ENCODE measurements at regions of chr3 and their contacts with region 1.

Region 1: DNA sequence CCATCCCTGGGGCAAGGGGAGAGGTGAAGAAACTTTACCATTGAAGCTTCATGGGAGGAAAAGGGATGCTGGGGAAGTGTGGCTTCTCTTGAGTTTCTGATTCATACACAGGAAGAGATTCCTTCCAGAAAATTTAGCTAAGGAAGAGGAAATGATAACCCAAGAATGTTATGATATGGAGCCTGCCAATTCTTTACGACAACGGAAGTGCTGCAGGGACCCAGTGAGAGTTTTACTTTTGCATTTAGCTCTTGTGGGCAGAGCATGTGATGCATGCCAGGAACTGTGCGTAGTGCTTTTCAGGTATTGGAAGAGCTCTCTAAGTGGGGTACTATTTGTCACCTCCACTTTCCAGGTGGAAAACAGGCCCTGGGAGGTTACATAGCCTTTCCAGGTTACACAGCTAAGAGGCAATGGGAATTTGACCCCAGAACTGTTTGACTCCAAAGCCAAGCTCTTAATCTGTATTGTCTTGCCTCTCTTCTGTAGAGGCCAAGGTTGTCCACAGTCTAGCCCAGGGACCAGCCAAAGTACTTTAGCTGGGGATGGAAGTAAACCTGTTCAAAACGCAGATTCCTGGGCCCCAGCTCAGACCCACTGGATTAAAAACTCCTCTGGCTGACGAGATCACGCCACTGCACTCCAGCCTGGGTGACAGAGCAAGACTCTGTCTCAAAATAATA is 23.0 kb downstream of the CMTM7 start:
- DNase-seq: no peak
- H3K4me3 ChIP-seq: no peak overlapping the region
- H3K27ac ChIP-seq: no peak overlapping the region
- H3K4me1 ChIP-seq: peaks cover 36% of the 10 kb centered on the region
- CTCF ChIP-seq: no peak

Region 2: DNA sequence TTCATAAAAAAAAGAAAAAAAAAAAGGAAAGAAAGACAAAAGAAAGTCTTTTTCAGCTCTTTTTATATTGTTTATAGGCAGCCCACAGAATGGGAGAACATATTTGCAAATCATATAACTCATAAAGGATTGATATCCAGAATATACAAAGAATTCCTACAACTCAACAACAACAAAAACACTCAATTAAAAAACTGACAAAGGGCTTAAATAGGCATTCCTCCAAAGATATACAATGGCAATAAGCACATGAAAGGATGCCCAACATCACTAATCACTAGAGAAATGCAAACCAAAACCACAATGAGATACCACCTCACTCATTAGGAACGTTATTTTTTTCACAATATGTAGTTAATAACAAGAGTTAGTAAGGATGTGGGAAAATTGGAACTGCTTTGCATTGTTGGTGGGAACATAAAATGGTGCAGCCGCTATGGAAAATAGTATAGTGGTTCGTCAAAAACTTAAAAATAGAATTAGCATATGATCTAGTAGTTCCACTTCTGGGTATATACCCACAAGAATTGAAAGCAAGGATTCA is 230.4 kb before region 1 on chr3:
- CTCF ChIA-PET with region 1: no interaction called
- POLR2A ChIA-PET with region 1: no interaction called
- intact Hi-C with region 1: no loop called
- DNase-seq: no peak
- H3K4me3 ChIP-seq: no peak overlapping the region
- H3K27ac ChIP-seq: no peak overlapping the region
- H3K4me1 ChIP-seq: peaks cover 6% of the 10 kb centered on the region
- CTCF ChIP-seq: no peak

Region 3: GRCh38 chr3:32428092-32429068 is 13.7 kb after region 1 on chr3:
- CTCF ChIA-PET with region 1: interaction called, 4 read pairs
- POLR2A ChIA-PET with region 1: interaction called, 10 read pairs
- intact Hi-C with region 1: no loop called
- DNase-seq: peak; percentile 87
- H3K4me3 ChIP-seq: peak overlapping the region; percentile 45
- H3K27ac ChIP-seq: peak overlapping the region; percentile 82
- H3K4me1 ChIP-seq: peaks cover 94% of the 10 kb centered on the region
- CTCF ChIP-seq: no peak

Measured in OCI-LY7 (cell line).